ENCODE measurements at regions of chr6 and their contacts with region 1.

Region 1: DNA sequence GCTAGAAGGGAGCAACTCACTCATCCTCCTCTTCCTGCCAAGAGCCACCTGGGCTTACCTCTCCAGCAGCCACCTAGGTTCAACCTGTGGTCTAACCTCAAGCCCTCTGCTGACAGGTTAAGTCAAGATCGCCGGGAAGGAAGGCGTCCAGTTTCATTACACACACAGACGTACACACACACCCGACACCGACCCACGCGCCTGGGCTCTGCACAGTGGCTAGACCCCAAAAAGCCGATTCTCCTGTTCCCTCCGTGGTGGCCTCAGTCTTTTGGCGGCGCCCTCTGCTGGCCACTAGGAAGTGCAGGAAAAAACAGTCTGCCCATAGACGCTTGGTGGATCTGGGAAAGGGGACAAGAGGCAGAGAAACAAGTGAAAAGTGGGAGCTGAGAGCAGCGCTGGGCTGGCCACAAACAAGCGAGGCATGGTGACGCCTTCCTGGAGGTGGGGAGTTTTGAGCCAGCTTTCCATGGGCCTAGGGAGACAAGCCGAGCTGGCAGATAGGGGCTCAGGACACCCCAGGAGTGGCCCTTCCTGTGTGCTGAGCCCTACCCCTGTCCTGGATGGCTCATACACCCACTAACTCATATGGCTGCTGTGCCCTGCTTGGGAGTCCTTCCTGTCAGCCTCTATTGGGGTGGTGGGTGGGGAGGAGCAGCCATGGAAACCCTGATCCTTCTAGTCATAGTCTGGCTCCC is 52.7 kb downstream of the MRPL14 start:
- DNase-seq: peak; percentile 39 to 84 (median 50)
- ATAC-seq: peak; percentile 43
- H3K4me3 ChIP-seq: no peak overlapping the region
- H3K4me3 Mint-ChIP-seq: peak overlapping the region; percentile 81
- H3K27ac ChIP-seq: no peak overlapping the region
- H3K27ac Mint-ChIP-seq: no peak overlapping the region
- H3K4me1 ChIP-seq: peaks cover 26% of the 10 kb centered on the region
- H3K4me1 Mint-ChIP-seq: peaks cover 17% of the 10 kb centered on the region
- H3K27me3 ChIP-seq: peaks cover 5 to 9% of the 10 kb centered on the region in 2 experiments
- H3K27me3 Mint-ChIP-seq: peaks cover 26% of the 10 kb centered on the region
- CTCF ChIP-seq: peak; percentile 82

Region 2: DNA sequence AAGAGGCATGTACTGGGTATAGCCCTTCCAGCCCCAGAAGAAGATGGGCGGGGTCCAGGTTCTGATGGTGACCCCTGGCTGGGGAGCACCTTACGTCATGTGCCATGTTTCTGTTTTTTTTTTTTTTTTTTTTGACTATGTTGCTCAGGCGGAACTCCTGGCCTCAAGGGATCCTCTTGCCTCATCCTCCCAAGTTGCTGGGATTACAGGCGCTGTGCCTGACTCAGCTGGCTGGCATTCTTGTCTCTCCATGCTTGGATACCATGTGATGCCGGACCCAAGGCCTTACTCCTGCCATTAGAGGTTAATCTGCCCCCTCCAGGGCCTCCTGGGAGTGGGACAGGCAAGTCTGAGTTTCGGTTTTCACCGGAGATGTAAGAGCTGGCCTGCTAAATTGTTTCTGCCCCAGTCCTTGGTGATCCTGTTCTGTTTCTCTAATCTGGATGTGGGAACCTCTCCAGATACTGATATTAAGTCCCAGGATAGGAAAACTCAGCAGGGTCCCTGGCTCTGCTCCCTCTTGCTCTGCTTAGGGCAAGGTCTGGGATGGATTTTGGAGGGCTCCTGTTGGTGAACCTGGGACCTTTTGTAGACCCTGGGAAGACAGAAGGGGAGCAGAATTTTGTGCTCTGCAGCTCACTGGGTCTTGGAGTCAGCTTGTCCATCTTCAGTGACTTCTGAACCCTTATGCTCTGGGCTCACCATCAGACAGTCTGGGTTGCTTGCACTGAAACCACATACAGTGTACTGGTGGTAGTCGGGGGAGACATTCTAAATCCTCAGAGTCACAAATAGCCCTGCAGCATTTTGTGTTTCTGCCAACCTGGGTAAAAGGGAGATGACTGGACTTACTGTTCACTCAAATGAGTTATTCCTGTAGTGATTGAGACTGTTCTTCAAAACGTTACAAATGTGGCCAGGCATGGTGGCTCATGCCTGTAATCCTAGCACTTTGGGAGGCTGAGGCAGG is 953.4 kb before region 1 on chr6:
- CTCF ChIA-PET with region 1: no interaction called
- POLR2A ChIA-PET with region 1: no interaction called
- intact Hi-C with region 1: no loop called
- DNase-seq: no peak
- ATAC-seq: no peak
- H3K4me3 ChIP-seq: no peak overlapping the region
- H3K4me3 Mint-ChIP-seq: no peak overlapping the region
- H3K27ac ChIP-seq: no peak overlapping the region
- H3K27ac Mint-ChIP-seq: no peak overlapping the region
- H3K4me1 ChIP-seq: no peaks in the 10 kb centered on the region
- H3K4me1 Mint-ChIP-seq: no peaks in the 10 kb centered on the region
- H3K27me3 ChIP-seq: no peaks in the 10 kb centered on the region
- H3K27me3 Mint-ChIP-seq: no peaks in the 10 kb centered on the region
- CTCF ChIP-seq: no peak

Region 3: DNA sequence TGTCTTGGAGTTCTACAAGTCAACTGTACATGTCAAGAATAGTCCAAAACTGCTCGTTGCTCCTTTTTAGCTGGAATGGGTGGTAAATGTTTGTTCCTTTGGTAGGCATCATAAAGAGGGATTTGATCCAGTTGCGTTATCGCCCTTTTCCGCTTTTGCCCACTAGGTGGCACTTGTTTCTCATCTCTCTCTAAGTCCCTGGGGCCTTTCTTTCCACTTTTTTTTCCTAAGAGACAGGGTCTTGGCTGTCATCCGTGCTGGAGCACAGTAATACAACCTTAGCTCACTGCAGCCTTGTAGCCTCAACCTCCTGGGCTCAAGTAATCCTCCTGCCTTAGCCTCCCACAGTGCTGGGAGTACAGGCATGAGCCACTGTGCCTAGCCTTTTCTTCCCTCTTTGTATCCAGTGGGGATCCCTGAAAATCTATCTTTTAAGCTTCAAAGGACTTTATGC is 466.3 kb before region 1 on chr6:
- CTCF ChIA-PET with region 1: interaction called, 7 read pairs
- POLR2A ChIA-PET with region 1: no interaction called
- intact Hi-C with region 1: loop called in 1 of 2 experiments (anchors 5 kb)
- DNase-seq: peak; percentile 32 to 77 (median 49)
- ATAC-seq: peak; percentile 48
- H3K4me3 ChIP-seq: no peak overlapping the region
- H3K4me3 Mint-ChIP-seq: no peak overlapping the region
- H3K27ac ChIP-seq: no peak overlapping the region
- H3K27ac Mint-ChIP-seq: no peak overlapping the region
- H3K4me1 ChIP-seq: no peaks in the 10 kb centered on the region
- H3K4me1 Mint-ChIP-seq: no peaks in the 10 kb centered on the region
- H3K27me3 ChIP-seq: no peaks in the 10 kb centered on the region
- H3K27me3 Mint-ChIP-seq: no peaks in the 10 kb centered on the region
- CTCF ChIP-seq: peak; percentile 91

Region 4: GRCh38 chr6:43667245-43668150 is 407.1 kb before region 1 on chr6:
- CTCF ChIA-PET with region 1: interaction called, 14 read pairs
- POLR2A ChIA-PET with region 1: interaction called, 4 read pairs
- intact Hi-C with region 1: loop called (anchors 1 kb)
- DNase-seq: peak; percentile 58 to 89 (median 80)
- ATAC-seq: peak; percentile 83
- H3K4me3 ChIP-seq: no peak overlapping the region
- H3K4me3 Mint-ChIP-seq: peak overlapping the region; percentile 72
- H3K27ac ChIP-seq: no peak overlapping the region
- H3K27ac Mint-ChIP-seq: peak overlapping the region; percentile 67
- H3K4me1 ChIP-seq: peaks cover 17% of the 10 kb centered on the region
- H3K4me1 Mint-ChIP-seq: peaks cover 20% of the 10 kb centered on the region
- H3K27me3 ChIP-seq: no peaks in the 10 kb centered on the region
- H3K27me3 Mint-ChIP-seq: no peaks in the 10 kb centered on the region
- CTCF ChIP-seq: peak; percentile 78

Region 5: DNA sequence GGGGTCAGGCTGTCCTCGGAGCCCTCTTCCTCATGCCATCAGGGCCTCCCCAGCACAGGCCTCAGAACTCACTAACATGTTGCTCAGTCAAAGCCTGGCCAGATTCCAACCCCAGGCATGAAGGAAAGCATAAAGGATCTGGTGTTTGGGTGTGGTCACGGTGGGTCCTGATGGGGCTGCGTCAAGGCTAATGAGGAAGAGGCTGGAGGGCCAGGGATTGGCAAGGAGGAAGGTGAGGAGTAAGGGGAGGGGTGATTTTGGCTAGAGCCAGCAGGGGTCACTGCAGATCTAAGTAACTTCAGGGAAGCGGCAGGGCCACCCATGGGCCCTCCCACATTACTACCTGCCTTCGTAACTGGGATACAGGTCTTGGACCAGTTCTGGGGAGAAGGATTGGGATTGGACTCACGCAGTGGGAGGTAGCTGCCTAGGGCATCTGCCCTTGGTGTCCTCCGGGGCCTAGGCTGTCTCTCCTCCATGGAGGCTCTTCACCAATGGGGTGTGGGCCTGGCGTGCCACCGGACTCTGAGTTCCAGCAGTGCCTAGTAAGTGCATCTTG is 350.8 kb before region 1 on chr6:
- CTCF ChIA-PET with region 1: interaction called, 8 read pairs
- POLR2A ChIA-PET with region 1: interaction called, 15 read pairs
- intact Hi-C with region 1: loop called (anchors 1 kb)
- DNase-seq: peak; percentile 43 to 85 (median 58)
- ATAC-seq: peak; percentile 68
- H3K4me3 ChIP-seq: no peak overlapping the region
- H3K4me3 Mint-ChIP-seq: no peak overlapping the region
- H3K27ac ChIP-seq: no peak overlapping the region
- H3K27ac Mint-ChIP-seq: peak overlapping the region; percentile 85
- H3K4me1 ChIP-seq: peaks cover 28% of the 10 kb centered on the region
- H3K4me1 Mint-ChIP-seq: peaks cover 30% of the 10 kb centered on the region
- H3K27me3 ChIP-seq: no peaks in the 10 kb centered on the region
- H3K27me3 Mint-ChIP-seq: no peaks in the 10 kb centered on the region
- CTCF ChIP-seq: peak; percentile 72

Region 6: GRCh38 chr6:43769526-43770416 is 304.8 kb before region 1 on chr6 and contains the start of gene VEGFA:
- CTCF ChIA-PET with region 1: interaction called, 20 read pairs
- POLR2A ChIA-PET with region 1: interaction called, 9 read pairs
- intact Hi-C with region 1: loop called (anchors 1 kb)
- DNase-seq: peak; percentile 81 to 93 (median 85)
- ATAC-seq: peak; percentile 84
- H3K4me3 ChIP-seq: peak within 1 kb of the TSS; percentile 62
- H3K4me3 Mint-ChIP-seq: peak within 1 kb of the TSS; percentile 88
- H3K27ac ChIP-seq: no peak within 1 kb of the TSS
- H3K27ac Mint-ChIP-seq: peak within 1 kb of the TSS; percentile 39
- H3K4me1 ChIP-seq: peaks cover 33% of the 10 kb centered on the region
- H3K4me1 Mint-ChIP-seq: peaks cover 22% of the 10 kb centered on the region
- H3K27me3 ChIP-seq: peaks cover 27 to 28% of the 10 kb centered on the region in 2 experiments
- H3K27me3 Mint-ChIP-seq: peaks cover 38% of the 10 kb centered on the region
- CTCF ChIP-seq: peak; percentile 94
- total RNA-seq, gene VEGFA: 3.5 to 3.7 TPM

Region 7: DNA sequence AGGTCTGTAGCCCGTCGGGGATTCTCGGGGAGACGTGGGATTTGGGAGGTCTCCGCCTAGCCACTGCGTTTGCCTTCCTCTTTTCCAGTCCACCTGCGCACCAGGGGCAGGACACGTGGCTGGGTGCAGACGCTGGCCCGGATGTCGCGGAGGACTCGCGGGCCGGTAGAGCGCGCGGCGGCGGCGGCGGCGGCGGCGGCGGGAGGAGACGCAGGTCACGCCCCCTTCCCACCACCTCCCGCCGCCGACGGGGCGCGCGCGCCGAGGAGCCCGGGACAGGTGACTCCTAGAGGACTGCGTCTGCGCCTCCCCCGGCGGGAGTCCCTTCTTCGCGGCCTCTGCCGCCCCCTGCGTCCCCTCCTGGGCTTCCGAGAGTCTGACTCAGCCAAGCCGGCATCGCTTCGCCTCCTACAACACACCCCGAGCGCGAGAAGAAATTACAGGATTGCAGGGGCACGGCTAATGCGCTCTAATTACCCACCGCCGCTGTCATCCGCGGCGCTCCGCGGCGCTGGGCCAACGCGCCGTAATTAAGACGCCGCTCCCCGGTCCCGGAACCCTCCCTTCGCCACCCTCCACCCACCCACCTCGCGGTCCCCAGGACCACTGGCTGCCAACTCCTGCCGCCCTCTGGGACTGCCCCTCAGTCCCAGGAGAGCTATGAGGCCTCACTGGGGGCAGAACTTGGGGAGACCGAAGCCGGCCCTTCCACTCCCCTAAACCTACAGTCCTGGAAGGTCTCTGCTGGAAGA is 71.8 kb before region 1 on chr6:
- CTCF ChIA-PET with region 1: no interaction called
- POLR2A ChIA-PET with region 1: no interaction called
- intact Hi-C with region 1: loop called in 1 of 2 experiments (anchors 5 kb)
- DNase-seq: peak; percentile 15 to 77 (median 46)
- ATAC-seq: peak; percentile 77
- H3K4me3 ChIP-seq: peak overlapping the region; percentile 53
- H3K4me3 Mint-ChIP-seq: peak overlapping the region; percentile 76
- H3K27ac ChIP-seq: no peak overlapping the region
- H3K27ac Mint-ChIP-seq: no peak overlapping the region
- H3K4me1 ChIP-seq: peaks cover 17% of the 10 kb centered on the region
- H3K4me1 Mint-ChIP-seq: peaks cover 13% of the 10 kb centered on the region
- H3K27me3 ChIP-seq: peaks cover 35 to 47% of the 10 kb centered on the region in 2 experiments
- H3K27me3 Mint-ChIP-seq: peaks cover 59% of the 10 kb centered on the region
- CTCF ChIP-seq: no peak

Measured in CD4-positive, alpha-beta T cell (primary cell).